CD4-positive, alpha-beta T cell (primary cell): ENCODE measurements at regions of chr10 and their contacts with region 1.

Region 1: GRCh38 chr10:46030091-46030937 is at the start of gene NCOA4:
- DNase-seq: peak; percentile 89 to 99 (median 96)
- ATAC-seq: peak; percentile 97
- H3K4me3 ChIP-seq: peak within 1 kb of the TSS; percentile 87
- H3K4me3 Mint-ChIP-seq: peak within 1 kb of the TSS; percentile 91
- H3K27ac ChIP-seq: peak within 1 kb of the TSS; percentile 92 to 94
- H3K27ac Mint-ChIP-seq: peak within 1 kb of the TSS; percentile 87
- H3K4me1 ChIP-seq: peaks cover 40% of the 10 kb centered on the region
- H3K4me1 Mint-ChIP-seq: peaks cover 55% of the 10 kb centered on the region
- H3K27me3 ChIP-seq: no peaks in the 10 kb centered on the region
- H3K27me3 Mint-ChIP-seq: no peaks in the 10 kb centered on the region
- CTCF ChIP-seq: peak; percentile 75
- total RNA-seq, gene NCOA4: 41.0 to 42.9 TPM

Region 2: GRCh38 chr10:45229823-45230222 is 800.5 kb before region 1 on chr10:
- CTCF ChIA-PET with region 1: no interaction called
- POLR2A ChIA-PET with region 1: no interaction called
- intact Hi-C with region 1: loop called (anchors 5 to 10 kb)
- DNase-seq: no peak
- ATAC-seq: no peak
- H3K4me3 ChIP-seq: no peak overlapping the region
- H3K4me3 Mint-ChIP-seq: no peak overlapping the region
- H3K27ac ChIP-seq: no peak overlapping the region
- H3K27ac Mint-ChIP-seq: no peak overlapping the region
- H3K4me1 ChIP-seq: no peaks in the 10 kb centered on the region
- H3K4me1 Mint-ChIP-seq: no peaks in the 10 kb centered on the region
- H3K27me3 ChIP-seq: peaks cover 0 to 5% of the 10 kb centered on the region in 2 experiments
- H3K27me3 Mint-ChIP-seq: peaks cover 12% of the 10 kb centered on the region
- CTCF ChIP-seq: no peak

Region 3: GRCh38 chr10:45235798-45236231 is 794.5 kb before region 1 on chr10:
- CTCF ChIA-PET with region 1: no interaction called
- POLR2A ChIA-PET with region 1: no interaction called
- intact Hi-C with region 1: loop called (anchors 5 to 10 kb)
- DNase-seq: no peak
- ATAC-seq: no peak
- H3K4me3 ChIP-seq: no peak overlapping the region
- H3K4me3 Mint-ChIP-seq: no peak overlapping the region
- H3K27ac ChIP-seq: no peak overlapping the region
- H3K27ac Mint-ChIP-seq: no peak overlapping the region
- H3K4me1 ChIP-seq: no peaks in the 10 kb centered on the region
- H3K4me1 Mint-ChIP-seq: peaks cover 3% of the 10 kb centered on the region
- H3K27me3 ChIP-seq: no peaks in the 10 kb centered on the region
- H3K27me3 Mint-ChIP-seq: peaks cover 15% of the 10 kb centered on the region
- CTCF ChIP-seq: no peak

Region 4: DNA sequence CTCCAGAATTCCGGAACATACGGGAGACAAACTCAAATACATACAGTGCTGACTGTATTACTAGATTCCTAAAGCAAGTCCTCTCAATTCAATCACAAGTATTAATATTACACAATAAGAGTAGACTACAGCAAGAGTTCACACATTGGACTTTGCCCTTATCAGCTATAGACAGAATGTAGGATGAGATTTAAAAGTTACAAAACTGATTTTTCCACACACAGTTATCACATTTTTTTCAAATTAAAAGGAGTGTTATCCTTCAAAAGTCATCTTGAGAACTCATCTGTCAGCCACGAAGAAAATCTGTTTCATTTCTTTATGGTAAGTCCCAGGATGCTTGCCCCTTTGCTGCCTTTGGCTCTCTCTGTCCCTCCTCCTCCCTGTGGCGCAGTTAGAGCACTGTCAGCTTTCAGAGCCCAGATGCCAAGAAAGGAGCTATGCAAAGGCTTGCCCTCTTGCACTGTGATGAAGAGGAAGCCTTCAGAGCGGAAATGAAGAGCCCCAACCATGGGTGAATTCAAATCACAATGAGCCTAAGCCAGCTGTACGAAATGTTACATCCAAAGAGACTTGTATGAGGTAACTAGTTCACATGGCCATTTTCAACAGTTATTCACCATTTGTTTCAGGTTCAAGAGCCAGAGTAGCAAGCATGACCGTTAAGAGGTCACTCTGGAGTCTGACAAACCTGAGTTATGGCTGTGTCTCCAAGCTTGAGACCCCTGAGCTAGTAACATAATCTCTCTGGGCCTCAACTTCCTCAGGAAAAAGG is 10.6 kb before region 1 on chr10:
- CTCF ChIA-PET with region 1: interaction called, 3 read pairs
- POLR2A ChIA-PET with region 1: interaction called, 16 read pairs
- intact Hi-C with region 1: no loop called
- DNase-seq: peak in 6 of 14 experiments; percentile 2 to 49 (median 28)
- ATAC-seq: peak; percentile 32
- H3K4me3 ChIP-seq: peak overlapping the region; percentile 6
- H3K4me3 Mint-ChIP-seq: peak overlapping the region; percentile 32
- H3K27ac ChIP-seq: peak overlapping the region in 1 of 2 donors; percentile 7
- H3K27ac Mint-ChIP-seq: peak overlapping the region; percentile 75
- H3K4me1 ChIP-seq: peaks cover 41% of the 10 kb centered on the region
- H3K4me1 Mint-ChIP-seq: peaks cover 81% of the 10 kb centered on the region
- H3K27me3 ChIP-seq: no peaks in the 10 kb centered on the region
- H3K27me3 Mint-ChIP-seq: no peaks in the 10 kb centered on the region
- CTCF ChIP-seq: no peak

Region 5: GRCh38 chr10:46092524-46093081 is 62.3 kb after region 1 on chr10:
- CTCF ChIA-PET with region 1: interaction called, 4 read pairs
- POLR2A ChIA-PET with region 1: interaction called, 5 read pairs
- intact Hi-C with region 1: loop called (anchors 2 kb)
- DNase-seq: peak in 6 of 14 experiments; percentile 30 to 86 (median 55)
- ATAC-seq: peak; percentile 48
- H3K4me3 ChIP-seq: peak overlapping the region; percentile 74
- H3K4me3 Mint-ChIP-seq: no peak overlapping the region
- H3K27ac ChIP-seq: peak overlapping the region; percentile 55 to 82
- H3K27ac Mint-ChIP-seq: no peak overlapping the region
- H3K4me1 ChIP-seq: peaks cover 82% of the 10 kb centered on the region
- H3K4me1 Mint-ChIP-seq: peaks cover 10% of the 10 kb centered on the region
- H3K27me3 ChIP-seq: no peaks in the 10 kb centered on the region
- H3K27me3 Mint-ChIP-seq: no peaks in the 10 kb centered on the region
- CTCF ChIP-seq: no peak

Region 6: DNA sequence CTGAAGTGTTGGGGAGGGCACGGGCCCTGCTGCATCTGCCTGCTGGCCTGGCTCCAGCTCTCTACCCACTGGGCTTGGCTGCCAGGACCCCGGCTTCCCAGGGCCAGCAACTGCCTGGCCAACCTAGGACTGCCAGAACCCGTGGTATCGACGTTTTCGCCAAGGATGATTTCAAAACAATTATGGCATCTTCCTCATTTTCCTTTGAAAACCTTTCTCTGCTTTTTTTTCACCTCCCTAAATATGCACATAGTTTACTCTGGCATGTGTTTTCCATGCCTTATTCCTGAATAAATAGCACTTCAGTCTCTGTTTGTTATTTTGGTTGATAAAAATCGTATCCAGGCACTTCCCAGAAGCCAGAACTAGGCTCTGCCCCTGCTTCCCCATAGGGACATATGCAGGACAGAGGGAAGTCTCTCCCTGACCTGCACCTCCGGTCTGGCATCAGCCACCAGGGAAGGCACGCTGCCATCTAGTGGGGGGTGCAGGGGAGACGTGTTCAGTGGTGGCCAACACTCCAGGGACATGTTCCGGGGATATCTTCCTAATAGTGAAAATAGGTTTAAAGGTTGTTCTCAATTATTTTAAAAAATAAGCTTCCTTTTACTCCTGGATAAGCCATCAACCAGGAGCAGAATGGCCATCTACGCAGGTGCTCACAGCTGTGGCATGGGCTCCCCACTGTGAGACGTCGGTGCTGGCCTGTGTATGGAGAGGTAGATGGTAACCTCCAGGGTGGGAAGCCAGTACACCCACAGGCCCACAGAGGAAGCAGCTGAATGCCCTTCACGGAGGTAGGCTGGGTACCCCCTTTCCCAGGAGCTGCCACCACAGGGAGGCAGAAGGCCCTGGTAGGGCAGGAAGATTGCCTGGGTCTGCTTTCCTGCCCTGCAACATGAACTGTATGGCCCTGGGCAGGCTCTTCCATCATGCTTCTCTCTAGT is 225.8 kb after region 1 on chr10:
- CTCF ChIA-PET with region 1: no interaction called
- POLR2A ChIA-PET with region 1: no interaction called
- intact Hi-C with region 1: loop called in 1 of 2 experiments (anchors 10 kb)
- DNase-seq: peak; percentile 30 to 66 (median 41)
- ATAC-seq: peak; percentile 76
- H3K4me3 ChIP-seq: no peak overlapping the region
- H3K4me3 Mint-ChIP-seq: peak overlapping the region; percentile 22
- H3K27ac ChIP-seq: no peak overlapping the region
- H3K27ac Mint-ChIP-seq: peak overlapping the region; percentile 48
- H3K4me1 ChIP-seq: peaks cover 6% of the 10 kb centered on the region
- H3K4me1 Mint-ChIP-seq: peaks cover 58% of the 10 kb centered on the region
- H3K27me3 ChIP-seq: no peaks in the 10 kb centered on the region
- H3K27me3 Mint-ChIP-seq: no peaks in the 10 kb centered on the region
- CTCF ChIP-seq: peak; percentile 91